ENCODE measurements at regions of chr13 and their contacts with region 1.

Region 1: GRCh38 chr13:41613984-41614661 is 156.8 kb downstream of the RGCC start:
- DNase-seq: peak; percentile 75 to 88 (median 80)
- ATAC-seq: peak; percentile 95 to 96 (median 96)
- H3K4me3 ChIP-seq: no peak overlapping the region
- H3K27ac ChIP-seq: peak overlapping the region; percentile 64 to 94 (median 74)
- H3K4me1 ChIP-seq: peaks cover 10 to 48% (median 34%) of the 10 kb centered on the region in 12 donors
- H3K27me3 ChIP-seq: no peaks in the 10 kb centered on the region
- CTCF ChIP-seq: no peak
- POLR2A ChIP-seq: no peak

Region 2: GRCh38 chr13:41434831-41435520 is 179.1 kb before region 1 on chr13:
- intact Hi-C with region 1: no loop called
- DNase-seq: no peak
- ATAC-seq: no peak
- H3K4me3 ChIP-seq: no peak overlapping the region
- H3K27ac ChIP-seq: no peak overlapping the region
- H3K4me1 ChIP-seq: no peaks in the 10 kb centered on the region
- H3K27me3 ChIP-seq: no peaks in the 10 kb centered on the region
- CTCF ChIP-seq: no peak
- POLR2A ChIP-seq: no peak

Region 3: GRCh38 chr13:41456768-41457588 is 157.1 kb before region 1 on chr13 and contains the start of gene RGCC:
- intact Hi-C with region 1: loop called in 3 of 10 experiments (anchors 2 to 5 kb)
- DNase-seq: peak; percentile 77 to 91 (median 83)
- ATAC-seq: peak; percentile 70 to 93 (median 88)
- H3K4me3 ChIP-seq: peak within 1 kb of the TSS; percentile 67 to 92 (median 76)
- H3K27ac ChIP-seq: peak within 1 kb of the TSS; percentile 73 to 93 (median 85)
- H3K4me1 ChIP-seq: peaks cover 0 to 41% (median 7%) of the 10 kb centered on the region in 12 donors
- H3K27me3 ChIP-seq: peaks cover 0 to 20% (median 8%) of the 10 kb centered on the region in 9 donors
- CTCF ChIP-seq: no peak
- POLR2A ChIP-seq: peak in 1 of 2 donors; percentile 95
- total RNA-seq, gene RGCC: 22.9 to 228 (median 45.9) TPM

Region 4: GRCh38 chr13:41465241-41465847 is 148.8 kb before region 1 on chr13:
- intact Hi-C with region 1: loop called in 1 of 10 experiments (anchors 5 kb)
- DNase-seq: peak; percentile 67 to 83 (median 71)
- ATAC-seq: peak; percentile 63 to 89 (median 80)
- H3K4me3 ChIP-seq: no peak overlapping the region
- H3K27ac ChIP-seq: peak overlapping the region; percentile 8 to 90 (median 71)
- H3K4me1 ChIP-seq: peaks cover 0 to 64% (median 25%) of the 10 kb centered on the region in 12 donors
- H3K27me3 ChIP-seq: no peaks in the 10 kb centered on the region
- CTCF ChIP-seq: no peak
- POLR2A ChIP-seq: no peak

Region 5: DNA sequence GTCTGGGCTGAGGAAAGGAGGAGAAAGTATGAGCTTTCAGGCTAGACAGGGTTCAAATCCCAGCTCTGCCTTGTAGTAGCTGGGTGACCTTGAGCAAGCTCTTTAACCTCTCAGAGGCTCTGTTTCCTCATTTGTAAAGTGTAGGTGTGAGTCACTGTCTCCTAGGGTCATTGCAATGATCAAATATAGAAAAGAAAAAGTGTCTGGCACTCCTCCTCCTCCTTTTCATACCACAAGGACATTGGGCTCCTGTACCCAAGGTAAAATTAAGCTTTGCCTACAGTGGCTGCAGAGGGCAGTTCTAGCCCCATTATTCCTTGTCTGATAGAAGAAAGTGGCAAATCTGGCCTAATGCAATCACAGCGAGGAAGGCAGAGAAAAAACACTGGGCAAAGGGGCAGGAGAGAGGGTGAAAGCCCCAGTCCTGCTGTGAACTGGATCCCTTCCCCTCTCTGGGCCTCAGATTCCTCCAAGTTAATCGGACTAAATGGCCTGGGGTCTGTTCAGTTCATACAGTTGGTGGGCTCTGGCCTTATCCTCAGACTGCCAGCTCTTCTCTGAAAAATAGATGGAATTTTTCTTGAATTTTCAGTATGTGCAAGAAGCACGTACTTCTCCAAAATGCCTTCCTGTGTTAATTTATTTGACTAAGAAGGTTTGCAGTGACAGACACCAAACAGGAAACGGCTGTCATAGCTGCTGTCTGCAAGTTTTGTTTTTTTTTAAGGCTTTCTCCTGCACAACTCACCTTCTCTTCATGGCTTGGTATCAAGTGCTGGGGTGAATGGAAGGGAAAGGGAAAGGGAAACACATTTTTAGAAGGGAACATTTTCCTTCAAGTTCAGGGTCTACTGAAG is 121.5 kb before region 1 on chr13:
- intact Hi-C with region 1: loop called in 2 of 10 experiments (anchors 2 to 10 kb)
- DNase-seq: no peak
- ATAC-seq: peak in 1 of 4 donors; percentile 9
- H3K4me3 ChIP-seq: no peak overlapping the region
- H3K27ac ChIP-seq: peak overlapping the region in 10 of 12 donors; percentile 16 to 86 (median 48)
- H3K4me1 ChIP-seq: peaks cover 5 to 54% (median 36%) of the 10 kb centered on the region in 12 donors
- H3K27me3 ChIP-seq: no peaks in the 10 kb centered on the region
- CTCF ChIP-seq: no peak
- POLR2A ChIP-seq: no peak

Region 6: DNA sequence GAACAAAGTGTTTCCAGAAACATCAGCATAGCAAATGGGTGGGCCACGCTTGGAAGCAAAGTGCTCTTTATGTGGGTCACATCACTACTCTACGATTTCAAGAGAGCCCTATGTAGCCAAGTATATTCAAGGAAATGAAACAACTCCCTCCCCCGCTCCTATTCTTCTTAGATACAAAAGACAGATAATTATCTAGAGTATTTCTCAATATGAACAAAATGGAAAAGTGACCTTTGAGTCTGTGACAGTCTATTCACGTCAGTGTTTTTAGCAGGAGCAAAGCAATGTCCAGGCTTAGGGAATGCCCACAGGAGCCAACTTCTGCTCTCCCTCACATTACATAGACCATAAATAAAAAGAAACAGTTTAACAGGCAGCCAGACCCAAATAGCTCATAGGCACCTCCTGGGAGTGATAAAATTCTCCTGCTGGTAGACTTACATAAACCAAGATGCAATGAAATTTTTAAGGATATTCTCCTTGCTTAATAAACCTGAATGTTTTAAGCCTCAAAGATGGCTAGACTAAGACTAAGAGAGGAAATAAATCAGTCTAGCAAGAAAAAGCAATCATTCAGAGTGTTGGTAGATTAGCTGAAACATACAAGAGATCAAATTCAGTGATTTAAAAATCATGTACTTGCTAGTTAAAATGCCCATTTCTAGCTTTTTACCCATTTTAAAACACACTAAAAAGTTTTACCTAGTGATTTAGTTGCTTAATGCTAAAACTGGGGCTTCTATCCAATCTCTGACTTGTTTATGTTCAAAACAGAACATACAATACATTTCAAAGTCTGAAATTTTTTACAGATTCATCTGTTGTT is 26.0 kb after region 1 on chr13:
- intact Hi-C with region 1: loop called in 6 of 10 experiments (anchors 1 to 5 kb)
- DNase-seq: peak in 1 of 5 donors; percentile 37
- ATAC-seq: peak; percentile 82 to 94 (median 88)
- H3K4me3 ChIP-seq: no peak overlapping the region
- H3K27ac ChIP-seq: peak overlapping the region; percentile 43 to 79 (median 72)
- H3K4me1 ChIP-seq: peaks cover 0 to 42% (median 28%) of the 10 kb centered on the region in 12 donors
- H3K27me3 ChIP-seq: no peaks in the 10 kb centered on the region
- CTCF ChIP-seq: no peak
- POLR2A ChIP-seq: peak in 1 of 2 donors; percentile 27